ENCODE measurements at regions of chr12 and their contacts with region 1.

Region 1: GRCh38 chr12:121626087-121626852 is at the start of gene ORAI1:
- DNase-seq: peak; percentile 97 to 98 (median 98)
- ATAC-seq: peak; percentile 83
- H3K4me3 ChIP-seq: peak within 1 kb of the TSS; percentile 90
- H3K27ac ChIP-seq: peak within 1 kb of the TSS; percentile 92
- H3K4me1 ChIP-seq: peaks cover 34 to 43% of the 10 kb centered on the region in 2 experiments
- H3K27me3 ChIP-seq: no peaks in the 10 kb centered on the region
- CTCF ChIP-seq: peak in 2 of 3 experiments; percentile 21 to 52; a peak in 3 of 6 replicates
- EP300 ChIP-seq: no peak
- POLR2A ChIP-seq: peak; percentile 56
- RAD21 ChIP-seq: peak in 1 of 2 experiments; percentile 13; a peak in 2 of 4 replicates
- polyA plus RNA-seq, gene ORAI1: 2.9 to 3.7 TPM

Region 2: DNA sequence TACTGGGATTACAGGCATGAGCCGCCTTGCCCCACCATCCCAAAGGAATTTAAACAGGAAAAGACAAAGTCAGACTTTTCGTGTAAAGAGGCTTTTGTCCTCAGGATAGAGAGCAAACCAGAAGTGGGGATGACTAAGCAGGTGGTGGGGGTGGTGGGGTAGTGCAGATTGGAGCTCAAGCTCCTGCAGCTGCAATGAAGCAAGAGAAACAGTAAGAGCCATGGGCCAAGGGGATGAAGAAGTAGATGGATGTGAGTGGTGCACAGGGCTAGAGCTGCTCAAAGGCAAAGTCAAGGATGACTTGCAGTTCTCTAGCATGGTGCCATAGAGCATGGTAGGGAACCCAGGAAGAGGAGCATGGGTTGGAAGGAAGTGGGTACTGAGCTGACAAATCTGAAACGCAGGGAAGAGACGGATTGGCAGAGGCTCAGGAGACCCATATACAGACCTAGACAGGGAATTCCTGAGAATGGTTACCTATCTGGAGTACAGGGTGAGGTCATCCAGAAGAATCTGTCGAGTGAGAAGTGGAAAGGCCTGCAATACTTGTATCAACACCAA is 237.8 kb before region 1 on chr12:
- CTCF ChIA-PET with region 1: no interaction called
- POLR2A ChIA-PET with region 1: no interaction called
- in situ Hi-C with region 1: no loop called
- intact Hi-C with region 1: no loop called
- DNase-seq: peak in 3 of 4 experiments; percentile 12 to 45 (median 41)
- ATAC-seq: peak; percentile 70
- H3K4me3 ChIP-seq: no peak overlapping the region
- H3K27ac ChIP-seq: no peak overlapping the region
- H3K4me1 ChIP-seq: peaks cover 4 to 14% of the 10 kb centered on the region in 2 experiments; a peak in 3 of 5 replicates
- H3K27me3 ChIP-seq: no peaks in the 10 kb centered on the region
- CTCF ChIP-seq: no peak
- EP300 ChIP-seq: no peak
- POLR2A ChIP-seq: no peak
- RAD21 ChIP-seq: no peak

Region 3: DNA sequence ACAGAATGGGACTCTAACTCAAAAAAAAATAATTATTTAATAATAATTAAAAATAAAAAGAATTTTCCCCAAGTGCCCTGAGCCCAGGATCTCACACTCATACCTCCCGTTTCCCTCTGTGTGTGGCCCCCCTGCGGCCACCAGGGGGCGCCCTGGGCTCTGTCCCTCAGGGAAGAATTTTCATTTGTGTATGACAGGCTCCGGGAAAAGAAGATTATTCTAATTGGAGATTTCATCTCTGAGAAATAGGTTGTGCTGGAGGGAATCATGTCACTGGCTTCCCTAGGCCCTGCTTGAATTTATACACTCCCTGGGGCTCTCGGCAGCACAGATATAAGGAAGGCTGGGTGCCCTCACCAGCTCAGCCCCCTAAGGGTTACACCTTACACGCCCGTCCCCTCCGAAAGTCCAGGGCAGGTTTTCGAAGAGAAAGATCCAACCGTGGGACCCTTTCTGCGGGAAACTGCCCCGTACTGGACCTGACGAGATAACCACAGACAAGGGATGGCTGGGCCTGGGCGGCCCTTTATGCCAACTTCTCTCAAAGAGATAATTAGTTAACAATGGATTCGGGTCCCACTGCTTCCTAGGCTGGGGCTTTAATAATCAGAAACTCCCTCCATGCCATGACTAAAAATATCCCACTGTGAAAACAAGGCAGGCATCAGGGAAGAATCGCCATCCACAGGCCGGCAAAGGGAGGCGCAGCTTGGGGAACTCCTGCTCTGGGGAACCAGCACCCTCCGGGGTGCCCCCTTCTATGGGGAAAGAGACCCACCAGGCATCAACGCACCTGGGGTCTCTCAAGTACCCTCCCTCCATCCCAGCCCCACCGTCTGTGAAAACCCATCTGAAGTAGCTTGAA is 126.1 kb before region 1 on chr12:
- CTCF ChIA-PET with region 1: interaction called, 4 read pairs
- POLR2A ChIA-PET with region 1: no interaction called
- in situ Hi-C with region 1: no loop called
- intact Hi-C with region 1: loop called (anchors 2 kb)
- DNase-seq: peak; percentile 82 to 92 (median 90)
- ATAC-seq: peak; percentile 96
- H3K4me3 ChIP-seq: no peak overlapping the region
- H3K27ac ChIP-seq: no peak overlapping the region
- H3K4me1 ChIP-seq: no peaks in the 10 kb centered on the region; a peak in 1 of 5 replicates
- H3K27me3 ChIP-seq: no peaks in the 10 kb centered on the region
- CTCF ChIP-seq: peak; percentile 90 to 93 (median 92)
- EP300 ChIP-seq: no peak
- POLR2A ChIP-seq: no peak
- RAD21 ChIP-seq: peak; percentile 58 to 81

Region 4: DNA sequence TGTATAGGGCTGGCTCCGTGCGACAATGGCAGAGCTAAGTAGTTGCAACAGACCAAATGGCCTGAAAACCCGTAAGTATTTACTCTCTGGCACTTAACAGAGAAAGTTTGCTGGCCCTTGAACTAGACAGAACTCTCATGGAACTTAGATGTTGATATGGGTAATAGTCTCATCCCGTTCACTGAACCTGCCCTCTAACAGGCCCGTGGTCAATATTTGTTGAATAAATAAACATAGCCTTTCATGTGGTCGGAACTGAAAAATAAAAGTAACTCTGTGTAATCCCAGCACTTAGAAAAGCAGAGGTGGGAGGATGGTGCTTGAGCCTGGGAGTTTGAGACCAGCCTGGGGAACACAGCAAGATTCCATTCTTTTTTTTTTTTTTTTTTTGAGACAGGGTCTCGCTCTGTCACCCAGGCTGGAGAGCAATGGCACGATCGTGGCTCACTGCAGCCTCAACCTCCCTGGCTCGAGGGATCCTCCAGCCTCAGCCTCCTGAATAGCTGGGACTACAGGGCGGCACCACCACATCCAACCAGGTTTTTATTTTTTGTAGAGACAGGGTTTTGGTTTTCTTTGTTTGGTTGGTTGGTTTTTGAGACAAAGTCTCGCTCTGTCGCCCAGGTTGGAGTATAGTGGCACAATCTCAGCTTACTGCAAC is 75.2 kb before region 1 on chr12:
- CTCF ChIA-PET with region 1: interaction called, 4 read pairs
- POLR2A ChIA-PET with region 1: interaction called, 3 read pairs
- in situ Hi-C with region 1: no loop called
- intact Hi-C with region 1: loop called (anchors 1 kb)
- DNase-seq: no peak
- ATAC-seq: no peak
- H3K4me3 ChIP-seq: no peak overlapping the region
- H3K27ac ChIP-seq: no peak overlapping the region
- H3K4me1 ChIP-seq: peaks cover 0 to 7% of the 10 kb centered on the region in 2 experiments; a peak in 1 of 5 replicates
- H3K27me3 ChIP-seq: no peaks in the 10 kb centered on the region
- CTCF ChIP-seq: no peak
- EP300 ChIP-seq: no peak
- POLR2A ChIP-seq: no peak
- RAD21 ChIP-seq: no peak

Region 5: GRCh38 chr12:121579981-121580868 is 46.0 kb before region 1 on chr12:
- CTCF ChIA-PET with region 1: no interaction called
- POLR2A ChIA-PET with region 1: interaction called, 9 read pairs
- in situ Hi-C with region 1: no loop called
- intact Hi-C with region 1: loop called (anchors 2 kb)
- DNase-seq: peak; percentile 78 to 84 (median 84)
- ATAC-seq: peak; percentile 79
- H3K4me3 ChIP-seq: peak overlapping the region; percentile 54
- H3K27ac ChIP-seq: peak overlapping the region; percentile 88
- H3K4me1 ChIP-seq: peaks cover 42 to 47% of the 10 kb centered on the region in 2 experiments
- H3K27me3 ChIP-seq: no peaks in the 10 kb centered on the region
- CTCF ChIP-seq: no peak
- EP300 ChIP-seq: no peak
- POLR2A ChIP-seq: peak; percentile 29; the same call in 1 of the 2 replicates
- RAD21 ChIP-seq: no peak

Region 6: DNA sequence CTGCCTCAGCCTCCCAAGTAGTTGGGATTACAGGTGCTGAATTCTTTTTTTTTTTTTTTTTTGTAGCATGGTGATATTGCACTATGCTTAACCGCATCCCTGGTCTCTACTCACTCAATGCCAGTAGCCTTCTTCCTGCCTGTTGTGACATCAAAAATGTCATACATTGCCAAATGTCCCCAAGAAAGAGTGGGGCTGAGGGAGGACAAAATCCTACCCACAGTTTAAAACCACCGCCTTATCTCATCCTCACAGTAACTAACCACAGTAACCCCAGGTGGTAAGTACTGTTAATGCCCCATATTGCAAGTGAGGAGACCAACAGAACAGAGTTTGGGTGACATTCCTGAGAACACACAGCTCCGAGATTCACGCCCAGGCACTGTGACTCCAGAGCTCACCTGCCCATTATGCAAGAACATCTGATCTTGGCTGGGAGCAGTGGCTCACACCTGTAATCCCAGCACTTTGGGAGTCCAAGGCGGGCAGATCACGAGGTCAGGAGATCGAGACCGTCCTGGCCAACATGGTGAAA is 23.6 kb after region 1 on chr12:
- CTCF ChIA-PET with region 1: no interaction called
- POLR2A ChIA-PET with region 1: interaction called, 4 read pairs
- in situ Hi-C with region 1: no loop called
- intact Hi-C with region 1: loop called (anchors 2 kb)
- DNase-seq: peak; percentile 65 to 88 (median 76)
- ATAC-seq: peak; percentile 89
- H3K4me3 ChIP-seq: no peak overlapping the region
- H3K27ac ChIP-seq: no peak overlapping the region
- H3K4me1 ChIP-seq: peaks cover 15 to 28% of the 10 kb centered on the region in 2 experiments
- H3K27me3 ChIP-seq: no peaks in the 10 kb centered on the region
- CTCF ChIP-seq: no peak
- EP300 ChIP-seq: peak; percentile 95
- POLR2A ChIP-seq: no peak
- RAD21 ChIP-seq: peak in 1 of 2 experiments; percentile 33; a peak in 1 of 4 replicates

Region 7: DNA sequence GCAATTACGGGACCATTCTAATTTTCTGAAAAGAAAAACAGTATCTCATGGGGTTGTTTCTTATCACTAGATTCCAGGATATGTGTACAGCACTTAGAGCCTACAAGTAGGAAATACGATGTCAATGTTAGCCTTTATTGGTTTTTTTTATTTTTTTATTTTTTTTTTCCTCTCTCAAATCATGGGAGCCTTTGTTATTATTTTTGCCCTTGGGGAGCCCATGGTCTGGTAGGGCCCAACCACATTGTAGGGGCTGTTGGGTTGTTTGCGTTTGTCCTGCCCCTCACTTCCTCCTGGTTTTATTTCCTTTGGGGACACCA is 37.3 kb after region 1 on chr12:
- CTCF ChIA-PET with region 1: no interaction called
- POLR2A ChIA-PET with region 1: interaction called, 3 read pairs
- in situ Hi-C with region 1: no loop called
- intact Hi-C with region 1: loop called (anchors 5 kb)
- DNase-seq: no peak
- ATAC-seq: no peak
- H3K4me3 ChIP-seq: no peak overlapping the region; the same call in 1 of the 2 replicates
- H3K27ac ChIP-seq: peak overlapping the region; percentile 51
- H3K4me1 ChIP-seq: peaks cover 15 to 31% of the 10 kb centered on the region in 2 experiments; a peak in 4 of 5 replicates
- H3K27me3 ChIP-seq: no peaks in the 10 kb centered on the region
- CTCF ChIP-seq: no peak
- EP300 ChIP-seq: 0 out of 2 replicates have a peak, but pooled peaks have one; percentile 9
- POLR2A ChIP-seq: no peak
- RAD21 ChIP-seq: no peak

Region 8: DNA sequence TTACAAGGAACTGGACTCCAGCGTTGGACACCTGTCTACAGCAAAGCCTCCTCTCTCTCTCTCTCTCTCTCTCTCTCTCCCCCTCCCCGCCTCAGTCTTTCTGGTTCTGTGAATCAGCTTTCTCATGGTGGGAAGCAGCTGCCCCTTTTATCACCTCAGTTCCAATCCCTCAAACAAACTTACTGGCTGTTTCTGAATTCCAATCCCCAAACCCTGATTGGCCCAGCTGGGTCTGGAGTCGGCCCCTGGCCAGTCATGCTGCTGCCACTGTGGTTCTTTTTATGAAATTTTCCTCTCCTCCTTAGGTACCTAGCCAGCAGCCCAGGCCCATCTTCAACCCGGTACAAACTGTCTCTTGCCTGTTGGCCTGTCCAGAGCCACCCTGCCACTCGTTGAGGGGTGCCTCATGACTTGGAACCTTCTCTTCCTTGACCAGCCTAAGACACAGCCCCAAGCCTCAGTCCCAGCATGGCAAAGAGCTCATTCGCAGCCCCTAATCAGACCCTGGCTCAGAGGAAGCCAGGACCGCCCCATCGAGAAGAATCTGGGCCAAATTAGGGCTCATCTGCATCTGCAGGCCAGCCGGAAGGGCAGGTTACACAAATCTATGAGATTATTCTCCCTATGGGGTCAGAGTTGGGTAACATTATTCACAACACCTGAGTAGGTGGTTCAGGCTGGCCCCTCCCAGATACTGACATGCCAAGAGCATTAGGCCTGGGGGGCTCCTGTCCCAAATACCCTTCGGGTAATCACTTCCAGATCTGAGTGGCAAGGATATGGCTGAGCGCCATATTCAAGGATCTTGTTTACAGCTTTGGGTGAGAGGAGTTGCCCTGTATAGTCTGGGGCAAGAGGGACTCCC is 52.7 kb after region 1 on chr12:
- CTCF ChIA-PET with region 1: interaction called, 11 read pairs
- POLR2A ChIA-PET with region 1: no interaction called
- in situ Hi-C with region 1: no loop called
- intact Hi-C with region 1: loop called (anchors 2 kb)
- DNase-seq: peak in 3 of 4 experiments; percentile 27 to 36 (median 33)
- ATAC-seq: peak; percentile 46
- H3K4me3 ChIP-seq: no peak overlapping the region
- H3K27ac ChIP-seq: no peak overlapping the region
- H3K4me1 ChIP-seq: peaks cover 2 to 4% of the 10 kb centered on the region in 2 experiments; a peak in 2 of 5 replicates
- H3K27me3 ChIP-seq: no peaks in the 10 kb centered on the region
- CTCF ChIP-seq: no peak
- EP300 ChIP-seq: no peak
- POLR2A ChIP-seq: no peak
- RAD21 ChIP-seq: no peak